ENCODE measurements at regions of chrX and their contacts with region 1.

Region 1: DNA sequence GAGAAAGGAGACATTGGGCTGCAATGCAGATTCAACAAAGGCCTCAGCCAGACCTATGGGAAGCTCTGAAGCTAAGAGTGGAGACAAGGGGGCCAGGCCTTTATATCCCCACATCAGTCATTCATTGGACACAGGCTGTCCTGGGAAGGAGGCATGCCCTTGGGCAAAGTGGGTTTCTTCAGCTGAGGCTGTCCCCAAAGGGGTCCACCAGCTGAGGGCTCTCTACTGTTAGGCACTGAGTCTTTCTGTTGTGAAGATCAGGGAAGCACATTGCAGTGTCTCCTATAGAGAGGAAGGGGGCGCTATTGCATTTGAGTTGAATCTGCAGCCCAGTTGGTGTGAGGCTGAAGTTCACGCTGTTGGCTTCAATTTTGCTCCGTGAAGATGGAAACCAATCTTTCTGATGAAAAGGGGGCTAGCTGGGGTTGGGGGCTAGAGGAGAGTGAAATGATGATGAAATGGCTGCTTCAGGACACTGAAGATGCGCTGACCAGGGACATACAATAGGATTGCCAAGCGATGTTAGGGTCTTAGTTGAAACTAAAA is 48.0 kb downstream of the SLC25A5 start:
- DNase-seq: peak; percentile 6 to 73 (median 55)
- ATAC-seq: peak; percentile 99
- H3K4me3 ChIP-seq: no peak overlapping the region
- H3K4me3 Mint-ChIP-seq: no peak overlapping the region
- H3K27ac ChIP-seq: no peak overlapping the region
- H3K27ac Mint-ChIP-seq: peak overlapping the region in 5 of 9 donors; percentile 4 to 57 (median 40)
- H3K4me1 ChIP-seq: no peaks in the 10 kb centered on the region
- H3K4me1 Mint-ChIP-seq: peaks cover 2 to 7% (median 4%) of the 10 kb centered on the region in 7 donors
- H3K27me3 ChIP-seq: no peaks in the 10 kb centered on the region
- H3K27me3 Mint-ChIP-seq: no peaks in the 10 kb centered on the region

Region 2: DNA sequence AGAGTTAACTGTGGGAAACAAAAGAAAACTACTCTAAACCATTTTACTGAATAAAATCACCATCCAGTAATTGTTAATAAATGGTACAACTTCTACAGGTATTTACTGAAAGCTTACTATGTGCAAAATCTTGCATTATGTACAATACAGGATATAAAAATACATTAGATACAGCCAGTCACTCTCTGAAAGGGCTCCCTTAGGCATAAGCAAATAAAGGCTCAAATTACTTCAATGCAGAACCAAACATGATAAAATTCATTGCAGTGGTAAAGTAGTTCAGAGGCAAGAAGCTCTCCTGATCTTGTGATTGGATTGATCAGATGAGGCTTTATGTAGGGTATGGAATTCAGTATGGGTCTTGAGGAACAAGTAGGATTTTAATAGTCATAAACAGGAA is 1499.8 kb before region 1 on chrX:
- CTCF ChIA-PET with region 1: no interaction called
- POLR2A ChIA-PET with region 1: no interaction called
- intact Hi-C with region 1: no loop called
- DNase-seq: no peak
- ATAC-seq: no peak
- H3K4me3 ChIP-seq: no peak overlapping the region
- H3K4me3 Mint-ChIP-seq: no peak overlapping the region
- H3K27ac ChIP-seq: no peak overlapping the region
- H3K27ac Mint-ChIP-seq: no peak overlapping the region
- H3K4me1 ChIP-seq: no peaks in the 10 kb centered on the region
- H3K4me1 Mint-ChIP-seq: no peaks in the 10 kb centered on the region
- H3K27me3 ChIP-seq: no peaks in the 10 kb centered on the region
- H3K27me3 Mint-ChIP-seq: no peaks in the 10 kb centered on the region

Region 3: GRCh38 chrX:118026631-118027030 is 1489.6 kb before region 1 on chrX:
- CTCF ChIA-PET with region 1: no interaction called
- POLR2A ChIA-PET with region 1: no interaction called
- intact Hi-C with region 1: no loop called
- DNase-seq: no peak
- ATAC-seq: no peak
- H3K4me3 ChIP-seq: no peak overlapping the region
- H3K4me3 Mint-ChIP-seq: no peak overlapping the region
- H3K27ac ChIP-seq: no peak overlapping the region
- H3K27ac Mint-ChIP-seq: no peak overlapping the region
- H3K4me1 ChIP-seq: no peaks in the 10 kb centered on the region
- H3K4me1 Mint-ChIP-seq: no peaks in the 10 kb centered on the region
- H3K27me3 ChIP-seq: no peaks in the 10 kb centered on the region
- H3K27me3 Mint-ChIP-seq: no peaks in the 10 kb centered on the region

Region 4: GRCh38 chrX:119541188-119541587 is 25.0 kb after region 1 on chrX:
- CTCF ChIA-PET with region 1: no interaction called
- POLR2A ChIA-PET with region 1: interaction called, 4 read pairs
- intact Hi-C with region 1: loop called in 1 of 2 experiments (anchors 1 kb)
- DNase-seq: no peak
- ATAC-seq: no peak
- H3K4me3 ChIP-seq: no peak overlapping the region
- H3K4me3 Mint-ChIP-seq: no peak overlapping the region
- H3K27ac ChIP-seq: no peak overlapping the region
- H3K27ac Mint-ChIP-seq: peak overlapping the region in 1 of 9 donors; percentile 80
- H3K4me1 ChIP-seq: no peaks in the 10 kb centered on the region
- H3K4me1 Mint-ChIP-seq: no peaks in the 10 kb centered on the region
- H3K27me3 ChIP-seq: no peaks in the 10 kb centered on the region
- H3K27me3 Mint-ChIP-seq: no peaks in the 10 kb centered on the region

Region 5: DNA sequence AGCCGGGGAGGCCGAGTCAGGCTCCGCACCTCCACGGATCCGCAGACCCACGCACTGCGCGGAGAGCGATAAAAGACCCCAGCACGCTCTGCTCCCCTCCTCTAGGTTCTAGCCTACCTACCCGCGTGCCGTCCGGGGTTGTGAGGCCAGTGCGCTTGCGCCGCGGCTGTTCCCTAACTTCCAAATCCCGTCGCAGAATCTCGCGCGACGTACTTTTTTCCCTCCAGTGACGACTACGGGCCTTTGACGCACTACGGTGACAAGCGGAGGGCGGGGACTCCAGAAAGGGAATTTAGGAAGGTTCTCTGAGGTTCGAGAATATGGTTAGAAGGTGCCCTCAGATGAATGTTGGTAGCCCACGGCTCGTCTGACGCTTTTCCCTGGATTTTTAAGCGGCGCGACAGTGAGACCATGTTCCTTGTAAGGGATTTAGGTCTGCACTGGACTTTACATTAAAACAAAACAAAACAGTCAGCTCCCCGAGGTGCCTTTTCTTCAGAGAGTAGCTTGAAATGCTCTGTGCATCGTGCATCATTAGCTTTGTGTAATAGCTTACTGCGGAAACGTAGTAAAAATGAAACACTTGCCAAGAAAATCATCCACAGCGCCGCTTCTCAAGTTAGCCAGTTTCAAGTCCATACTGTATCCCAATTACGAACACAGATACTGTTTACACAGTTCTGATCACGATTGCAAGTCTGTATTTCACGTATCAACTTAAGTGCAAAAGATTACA is 90.2 kb after region 1 on chrX and contains the start of gene NKRF:
- CTCF ChIA-PET with region 1: interaction called, 4 read pairs
- POLR2A ChIA-PET with region 1: no interaction called
- intact Hi-C with region 1: loop called (anchors 2 to 5 kb)
- DNase-seq: peak; percentile 76 to 92 (median 88)
- ATAC-seq: peak; percentile 88
- H3K4me3 ChIP-seq: peak within 1 kb of the TSS; percentile 71
- H3K4me3 Mint-ChIP-seq: peak within 1 kb of the TSS; percentile 93 to 100 (median 94)
- H3K27ac ChIP-seq: peak within 1 kb of the TSS; percentile 90
- H3K27ac Mint-ChIP-seq: peak within 1 kb of the TSS; percentile 91 to 99 (median 98)
- H3K4me1 ChIP-seq: peaks cover 5 to 11% of the 10 kb centered on the region in 2 donors
- H3K4me1 Mint-ChIP-seq: peaks cover 6 to 48% (median 39%) of the 10 kb centered on the region in 7 donors
- H3K27me3 ChIP-seq: no peaks in the 10 kb centered on the region
- H3K27me3 Mint-ChIP-seq: peaks cover 0 to 4% (median 0%) of the 10 kb centered on the region in 5 donors
- total RNA-seq, gene NKRF: 9.9 to 16.4 (median 14.0) TPM

Region 6: GRCh38 chrX:119693040-119693995 is 177.1 kb after region 1 on chrX and contains the start of gene SEPTIN6:
- CTCF ChIA-PET with region 1: no interaction called
- POLR2A ChIA-PET with region 1: no interaction called
- intact Hi-C with region 1: loop called in 1 of 2 experiments (anchors 1 kb)
- DNase-seq: peak; percentile 69 to 93 (median 88)
- ATAC-seq: peak; percentile 83
- H3K4me3 ChIP-seq: peak within 1 kb of the TSS; percentile 77
- H3K4me3 Mint-ChIP-seq: peak within 1 kb of the TSS; percentile 96 to 100 (median 99)
- H3K27ac ChIP-seq: peak within 1 kb of the TSS; percentile 89
- H3K27ac Mint-ChIP-seq: peak within 1 kb of the TSS; percentile 95 to 99 (median 98)
- H3K4me1 ChIP-seq: peaks cover 0 to 7% of the 10 kb centered on the region in 2 donors
- H3K4me1 Mint-ChIP-seq: peaks cover 7 to 41% (median 13%) of the 10 kb centered on the region in 7 donors
- H3K27me3 ChIP-seq: no peaks in the 10 kb centered on the region
- H3K27me3 Mint-ChIP-seq: no peaks in the 10 kb centered on the region
- total RNA-seq, gene SEPTIN6: 151 to 315 (median 221) TPM

Region 7: GRCh38 chrX:119753571-119754257 is 237.5 kb after region 1 on chrX:
- CTCF ChIA-PET with region 1: interaction called, 5 read pairs
- POLR2A ChIA-PET with region 1: no interaction called
- intact Hi-C with region 1: loop called in 1 of 2 experiments (anchors 1 kb)
- DNase-seq: peak in 7 of 9 donors; percentile 77 to 89 (median 80)
- ATAC-seq: peak; percentile 83
- H3K4me3 ChIP-seq: no peak overlapping the region
- H3K4me3 Mint-ChIP-seq: peak overlapping the region; percentile 40 to 81 (median 70)
- H3K27ac ChIP-seq: peak overlapping the region; percentile 76
- H3K27ac Mint-ChIP-seq: peak overlapping the region; percentile 90 to 99 (median 96)
- H3K4me1 ChIP-seq: peaks cover 38 to 39% of the 10 kb centered on the region in 2 donors
- H3K4me1 Mint-ChIP-seq: peaks cover 21 to 50% (median 40%) of the 10 kb centered on the region in 7 donors
- H3K27me3 ChIP-seq: no peaks in the 10 kb centered on the region
- H3K27me3 Mint-ChIP-seq: no peaks in the 10 kb centered on the region

Region 8: DNA sequence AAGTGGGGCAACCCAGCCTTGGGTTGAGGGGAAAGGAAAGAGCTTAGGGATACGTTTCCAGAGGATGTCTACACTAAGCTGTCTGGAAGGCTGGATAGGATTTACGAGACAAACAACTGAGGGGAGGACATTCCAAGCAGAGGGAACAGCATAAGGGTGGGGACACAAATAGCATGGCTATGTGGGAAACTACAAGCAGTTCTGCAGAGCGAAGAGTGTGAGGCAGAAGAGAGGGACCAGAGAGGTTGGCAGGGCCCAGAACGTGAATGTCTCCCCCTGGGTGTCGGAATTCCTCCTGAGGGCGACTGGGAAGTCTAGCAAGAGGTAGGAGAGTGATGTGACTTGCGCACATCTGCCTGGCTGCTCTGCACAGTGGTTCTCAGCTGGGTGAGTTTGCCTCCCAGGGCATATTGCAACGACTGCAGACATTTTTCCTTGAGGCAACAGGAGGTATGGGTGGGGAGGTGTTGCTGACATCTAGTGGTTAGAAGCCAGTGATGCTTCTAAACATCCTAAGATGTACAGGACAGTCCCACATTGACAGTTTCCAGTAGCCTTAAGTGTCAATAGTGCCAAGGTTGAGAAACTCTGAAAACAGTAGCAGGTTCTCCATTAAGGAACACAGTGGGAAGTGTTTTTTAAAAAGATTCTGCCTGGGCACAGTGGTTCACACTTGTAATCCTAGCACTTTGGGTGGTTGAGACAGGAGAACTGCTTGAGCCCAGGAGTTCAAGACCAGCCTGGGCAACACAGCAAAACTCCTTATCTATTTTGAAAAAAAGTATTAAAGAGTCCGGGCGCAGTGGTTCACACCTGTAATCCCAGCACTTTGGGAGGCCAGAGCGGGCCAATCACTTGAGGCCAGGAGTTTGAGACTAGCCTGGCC is 364.6 kb after region 1 on chrX:
- CTCF ChIA-PET with region 1: no interaction called
- POLR2A ChIA-PET with region 1: interaction called, 3 read pairs
- intact Hi-C with region 1: loop called (anchors 1 to 5 kb)
- DNase-seq: peak in 7 of 9 donors; percentile 21 to 57 (median 36)
- ATAC-seq: peak; percentile 93
- H3K4me3 ChIP-seq: no peak overlapping the region
- H3K4me3 Mint-ChIP-seq: no peak overlapping the region
- H3K27ac ChIP-seq: peak overlapping the region; percentile 20
- H3K27ac Mint-ChIP-seq: peak overlapping the region in 8 of 9 donors; percentile 36 to 88 (median 66)
- H3K4me1 ChIP-seq: peaks cover 0 to 7% of the 10 kb centered on the region in 2 donors
- H3K4me1 Mint-ChIP-seq: peaks cover 0 to 26% (median 18%) of the 10 kb centered on the region in 7 donors
- H3K27me3 ChIP-seq: no peaks in the 10 kb centered on the region
- H3K27me3 Mint-ChIP-seq: no peaks in the 10 kb centered on the region

Measured in naive thymus-derived CD4-positive, alpha-beta T cell (primary cell).